Right ventricle myocardium inferior (tissue), 1 donor: ENCODE measurements at regions of chr12 and their contacts with region 1.

Region 1: GRCh38 chr12:29889737-29890136 is 106.0 kb upstream of the TMTC1 start:
- DNase-seq: no peak
- ATAC-seq: no peak

Region 2: GRCh38 chr12:29545102-29545467 is 344.7 kb before region 1 on chr12:
- intact Hi-C with region 1: loop called (anchors 10 kb)
- DNase-seq: no peak
- ATAC-seq: no peak

Region 3: DNA sequence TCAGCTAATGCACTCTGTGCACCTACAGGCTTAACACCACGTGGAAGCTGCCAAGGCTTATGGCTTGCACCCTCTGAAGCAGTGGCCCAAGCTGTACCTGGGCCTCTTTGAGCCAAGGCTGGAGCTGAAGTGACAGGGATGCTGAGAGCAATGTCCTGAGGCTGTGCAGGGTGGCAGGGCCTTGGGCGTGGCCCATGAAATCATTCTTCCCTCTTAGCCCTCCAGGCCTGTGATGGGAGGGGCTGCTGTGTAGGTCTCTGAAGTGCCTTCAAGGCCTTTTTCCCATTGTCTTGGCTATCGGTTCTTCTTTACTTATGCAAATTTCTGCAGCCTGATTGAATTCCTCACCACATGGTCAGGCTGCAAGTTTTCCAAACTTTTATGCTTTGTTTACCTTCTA is 58.6 kb before region 1 on chr12:
- intact Hi-C with region 1: no loop called
- DNase-seq: no peak
- ATAC-seq: no peak

Region 4: GRCh38 chr12:29929295-29929694 is 39.6 kb after region 1 on chr12:
- intact Hi-C with region 1: no loop called
- DNase-seq: no peak
- ATAC-seq: no peak